ENCODE measurements at regions of chr2 and their contacts with region 1.

Region 1: GRCh38 chr2:157587576-157587975 is 41.1 kb downstream of the ACVR1C start:
- DNase-seq: no peak

Region 2: DNA sequence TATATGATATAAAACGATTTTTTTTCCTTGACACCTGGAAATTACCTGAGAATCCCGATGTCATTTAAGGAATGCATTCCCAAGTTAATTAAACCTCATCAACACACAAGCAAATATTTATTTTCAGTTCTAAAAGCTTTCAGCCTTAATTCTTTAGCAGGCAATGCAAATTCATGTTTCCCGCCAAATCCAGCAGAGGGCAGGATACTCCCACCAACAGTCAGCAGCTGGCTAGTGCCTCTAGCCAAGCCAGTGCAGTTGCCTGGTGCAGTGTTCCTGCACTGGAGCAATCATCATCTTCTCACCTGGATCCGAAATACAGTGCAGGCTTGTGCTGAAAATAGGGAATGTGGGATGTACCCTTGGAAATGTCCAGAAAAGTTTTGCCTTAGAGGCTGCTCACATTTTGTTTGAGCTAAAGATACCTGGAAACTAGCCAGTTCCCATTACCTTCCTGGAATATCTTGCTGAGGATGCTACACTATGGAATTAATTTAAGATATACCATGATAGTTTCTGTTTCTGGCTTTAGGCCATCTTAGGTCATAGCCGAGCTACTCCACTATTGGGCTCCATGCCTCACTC is 95.3 kb before region 1 on chr2:
- intact Hi-C with region 1: loop called (anchors 5 kb)
- DNase-seq: peak; percentile 45 to 88 (median 76)